ENCODE measurements at regions of chrX and their contacts with region 1.

Region 1: DNA sequence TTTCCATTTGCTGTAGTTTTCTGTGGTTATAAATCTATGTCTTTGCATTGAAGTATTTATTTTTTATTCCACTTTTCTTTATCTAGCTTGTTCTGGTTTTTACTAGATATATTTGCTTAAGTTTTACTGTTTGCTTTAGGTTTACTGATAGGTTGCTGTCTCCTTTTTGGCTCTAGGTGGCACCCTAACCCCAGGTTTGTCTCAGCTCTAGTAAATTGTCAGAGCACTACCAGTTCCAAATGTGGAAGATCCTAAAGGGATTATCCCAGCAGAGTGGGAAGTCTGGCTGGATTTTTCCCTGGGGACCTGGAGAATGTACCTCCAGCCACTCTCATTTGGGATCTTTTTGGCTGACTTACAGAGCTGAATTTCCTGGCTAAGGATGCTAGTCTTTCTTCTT is 106.1 kb downstream of the PBDC1 start:
- DNase-seq: peak in 5 of 10 donors; percentile 25 to 85 (median 42)

Region 2: DNA sequence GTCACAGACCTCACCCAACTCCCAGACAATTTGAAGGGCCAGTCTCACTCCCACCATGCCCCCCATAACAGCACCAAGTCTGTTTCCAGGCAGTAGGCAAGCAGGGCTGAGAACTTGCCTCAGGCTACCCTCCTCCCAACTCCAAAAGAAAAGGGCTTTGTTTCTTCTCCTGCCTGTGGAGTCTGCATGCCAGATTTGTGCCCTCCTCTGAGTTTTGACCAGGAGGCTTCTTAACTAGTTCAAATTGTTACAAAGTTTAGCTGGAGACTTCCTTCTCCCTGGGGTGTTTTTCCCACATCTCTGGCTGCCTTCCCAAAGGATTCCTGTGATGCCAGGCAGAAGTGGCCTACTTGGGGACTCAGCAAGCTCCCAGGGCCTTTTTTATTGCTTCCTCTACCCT is 76.5 kb before region 1 on chrX:
- intact Hi-C with region 1: no loop called
- DNase-seq: no peak

Region 3: GRCh38 chrX:76454456-76454927 is 175.5 kb after region 1 on chrX:
- intact Hi-C with region 1: loop called (anchors 2 kb)
- DNase-seq: peak in 1 of 10 donors; percentile 60